ENCODE measurements at regions of chr14 and their contacts with region 1.

Region 1: GRCh38 chr14:102694530-102695166 is 82.6 kb upstream of the TRAF3 start:
- DNase-seq: peak; percentile 62
- ATAC-seq: peak; percentile 72
- H3K4me3 Mint-ChIP-seq: no peak overlapping the region
- H3K27ac Mint-ChIP-seq: peak overlapping the region; percentile 35; the same call in 1 of the 2 replicates
- H3K4me1 Mint-ChIP-seq: peaks cover 41% of the 10 kb centered on the region
- H3K27me3 Mint-ChIP-seq: no peaks in the 10 kb centered on the region
- CTCF ChIP-seq: peak; percentile 60

Region 2: DNA sequence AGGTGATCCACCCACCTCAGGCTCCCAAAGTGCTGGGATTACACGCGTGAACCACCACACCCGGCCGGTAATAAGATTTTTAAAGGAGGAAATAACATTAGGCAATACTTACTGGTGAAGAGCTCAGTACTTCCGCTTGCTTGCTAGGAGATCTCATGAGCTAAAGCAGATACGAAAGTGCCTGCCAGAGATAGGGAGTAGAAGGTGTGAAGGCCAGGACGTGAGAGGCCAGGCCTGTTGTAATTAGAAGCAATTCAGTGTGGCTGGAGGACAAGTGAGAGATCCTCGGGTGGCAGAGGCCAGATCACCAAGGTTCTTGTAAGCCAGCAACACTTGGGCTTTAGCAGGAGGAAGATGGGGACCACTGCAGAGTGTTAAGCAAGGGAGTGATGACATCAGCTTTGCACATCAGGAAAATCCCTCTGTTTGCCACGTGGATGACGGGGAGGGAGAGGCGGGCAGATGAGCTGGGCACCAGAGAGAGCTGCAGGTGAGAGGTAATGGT is 324.3 kb before region 1 on chr14:
- CTCF ChIA-PET with region 1: no interaction called
- POLR2A ChIA-PET with region 1: no interaction called
- DNase-seq: no peak
- ATAC-seq: no peak
- H3K4me3 Mint-ChIP-seq: no peak overlapping the region
- H3K27ac Mint-ChIP-seq: peak overlapping the region; percentile 35
- H3K4me1 Mint-ChIP-seq: no peaks in the 10 kb centered on the region
- H3K27me3 Mint-ChIP-seq: no peaks in the 10 kb centered on the region; the same call in 1 of the 2 replicates
- CTCF ChIP-seq: no peak

Region 3: DNA sequence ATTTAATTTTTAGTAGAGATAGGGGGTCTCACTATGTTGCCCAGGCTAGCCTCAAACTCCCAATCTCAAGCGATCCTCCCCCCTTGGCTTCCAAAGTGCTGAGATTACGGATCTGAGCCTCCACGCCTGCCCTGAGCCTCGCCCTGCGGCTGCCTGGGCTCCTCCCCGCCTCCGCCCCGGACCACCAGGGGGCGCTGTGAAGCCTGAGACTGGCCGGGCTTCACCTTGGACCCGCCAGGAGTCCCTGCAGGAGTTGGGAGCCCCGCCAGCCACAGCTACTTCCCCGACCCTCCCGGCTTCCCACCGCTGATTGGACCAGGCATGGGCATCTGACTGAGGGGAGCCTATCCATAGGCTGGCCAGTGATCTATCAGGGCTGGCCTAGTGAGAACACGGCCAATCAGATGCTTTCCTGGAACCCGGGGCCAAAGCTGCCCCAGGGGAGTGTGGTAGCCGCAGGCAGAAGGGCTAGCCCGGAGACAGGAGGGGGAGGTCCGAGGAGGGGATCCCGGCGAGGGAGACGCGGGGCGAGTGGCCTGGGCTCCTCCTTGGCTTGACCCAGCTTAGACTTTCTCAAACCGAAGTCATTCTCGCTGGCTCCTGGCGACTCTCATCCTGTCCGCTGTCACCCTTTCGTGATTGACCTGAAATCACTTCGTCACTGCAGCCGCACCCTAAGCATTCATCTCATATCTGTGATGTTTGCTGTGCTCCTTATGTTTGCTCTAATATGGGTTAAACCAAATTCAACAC is 170.0 kb before region 1 on chr14:
- CTCF ChIA-PET with region 1: interaction called, 26 read pairs
- POLR2A ChIA-PET with region 1: no interaction called
- DNase-seq: peak; percentile 99
- ATAC-seq: peak; percentile 99
- H3K4me3 Mint-ChIP-seq: peak overlapping the region; percentile 80
- H3K27ac Mint-ChIP-seq: peak overlapping the region; percentile 87
- H3K4me1 Mint-ChIP-seq: peaks cover 20% of the 10 kb centered on the region
- H3K27me3 Mint-ChIP-seq: no peaks in the 10 kb centered on the region; the same call in none of the 2 replicates
- CTCF ChIP-seq: peak; percentile 90

Region 4: GRCh38 chr14:102591889-102592763 is 102.5 kb before region 1 on chr14 and contains the start of gene RCOR1:
- CTCF ChIA-PET with region 1: interaction called, 15 read pairs
- POLR2A ChIA-PET with region 1: no interaction called
- DNase-seq: peak; percentile 98
- ATAC-seq: peak; percentile 87
- H3K4me3 Mint-ChIP-seq: peak within 1 kb of the TSS; percentile 81
- H3K27ac Mint-ChIP-seq: peak within 1 kb of the TSS; percentile 95
- H3K4me1 Mint-ChIP-seq: peaks cover 41% of the 10 kb centered on the region
- H3K27me3 Mint-ChIP-seq: peaks cover 5% of the 10 kb centered on the region; the same call in 1 of the 2 replicates
- CTCF ChIP-seq: no peak
- total RNA-seq, gene RCOR1: 25.1 to 25.4 TPM (median 25.4 TPM) in 3 replicates

Region 5: DNA sequence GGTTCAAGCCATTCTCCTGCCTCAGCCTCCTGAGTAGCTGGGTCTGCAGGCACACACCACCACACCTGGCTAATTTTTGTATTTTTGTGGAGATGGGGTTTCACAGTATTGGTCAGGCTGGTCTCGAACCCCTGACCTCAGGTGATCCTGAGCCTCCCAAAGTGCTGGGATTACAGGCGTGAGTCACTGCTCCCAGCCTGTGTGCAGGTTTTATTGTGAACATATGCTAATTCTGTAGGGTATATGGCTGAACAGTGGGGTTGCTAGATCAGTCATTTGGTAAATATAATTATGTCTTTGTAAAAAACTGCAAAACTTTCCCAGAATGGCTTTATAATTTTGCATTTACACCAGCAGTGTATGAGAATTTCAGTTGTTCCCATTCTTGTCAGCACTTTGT is 16.3 kb before region 1 on chr14:
- CTCF ChIA-PET with region 1: no interaction called
- POLR2A ChIA-PET with region 1: no interaction called
- DNase-seq: no peak
- ATAC-seq: no peak
- H3K4me3 Mint-ChIP-seq: no peak overlapping the region
- H3K27ac Mint-ChIP-seq: no peak overlapping the region
- H3K4me1 Mint-ChIP-seq: peaks cover 21% of the 10 kb centered on the region
- H3K27me3 Mint-ChIP-seq: peaks cover 3% of the 10 kb centered on the region; the same call in 1 of the 2 replicates
- CTCF ChIP-seq: no peak

Region 6: GRCh38 chr14:102759456-102760187 is 65.0 kb after region 1 on chr14:
- CTCF ChIA-PET with region 1: interaction called, 30 read pairs
- POLR2A ChIA-PET with region 1: interaction called, 3 read pairs
- DNase-seq: no peak
- ATAC-seq: peak; percentile 52
- H3K4me3 Mint-ChIP-seq: no peak overlapping the region; the same call in 1 of the 2 replicates
- H3K27ac Mint-ChIP-seq: peak overlapping the region; percentile 60; the same call in 1 of the 2 replicates
- H3K4me1 Mint-ChIP-seq: peaks cover 32% of the 10 kb centered on the region
- H3K27me3 Mint-ChIP-seq: no peaks in the 10 kb centered on the region; the same call in 1 of the 2 replicates
- CTCF ChIP-seq: no peak

Region 7: DNA sequence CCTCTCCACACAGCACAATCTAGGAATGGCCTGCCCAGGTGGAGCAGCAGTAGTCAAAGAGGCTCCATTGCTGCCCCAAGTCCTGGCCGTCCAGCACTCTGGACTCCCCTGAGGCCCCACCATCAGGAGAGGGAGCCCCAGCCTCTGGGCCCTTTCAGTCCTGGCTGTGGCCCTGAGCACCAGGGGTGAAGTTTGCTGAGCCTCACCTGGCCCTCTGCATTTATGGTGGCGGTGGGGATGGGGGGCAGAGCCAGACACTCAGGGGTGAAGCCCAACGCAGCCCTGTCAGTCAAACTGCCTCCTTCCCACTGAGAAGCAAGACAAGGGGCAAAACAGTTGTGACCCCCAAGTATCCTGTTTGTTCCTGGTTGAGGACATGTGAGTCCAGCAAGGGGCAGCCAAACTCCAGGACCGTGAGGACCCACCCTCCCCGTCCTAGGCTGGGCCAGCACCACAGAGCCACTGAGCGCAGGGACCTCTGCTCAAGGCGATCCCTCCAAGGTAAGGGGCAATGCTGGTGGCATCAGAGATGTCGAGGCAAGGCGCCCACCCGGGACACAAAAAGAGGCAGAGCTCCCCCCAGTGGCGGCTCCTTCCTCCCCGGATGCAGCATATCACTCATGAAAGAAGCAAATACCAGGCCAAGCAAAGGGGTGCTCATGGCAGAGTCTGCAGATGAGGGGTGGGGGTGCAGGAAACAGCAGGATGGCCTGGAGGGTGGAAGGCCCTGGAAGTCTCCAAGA is 223.0 kb after region 1 on chr14:
- CTCF ChIA-PET with region 1: interaction called, 13 read pairs
- POLR2A ChIA-PET with region 1: no interaction called
- DNase-seq: peak; percentile 84
- ATAC-seq: peak; percentile 77
- H3K4me3 Mint-ChIP-seq: no peak overlapping the region
- H3K27ac Mint-ChIP-seq: no peak overlapping the region
- H3K4me1 Mint-ChIP-seq: no peaks in the 10 kb centered on the region
- H3K27me3 Mint-ChIP-seq: no peaks in the 10 kb centered on the region
- CTCF ChIP-seq: peak; percentile 63

Measured in WTC11 (cell line).